HepG2 (cell line): ENCODE measurements at regions of chr19 and their contacts with region 1.

Region 1: DNA sequence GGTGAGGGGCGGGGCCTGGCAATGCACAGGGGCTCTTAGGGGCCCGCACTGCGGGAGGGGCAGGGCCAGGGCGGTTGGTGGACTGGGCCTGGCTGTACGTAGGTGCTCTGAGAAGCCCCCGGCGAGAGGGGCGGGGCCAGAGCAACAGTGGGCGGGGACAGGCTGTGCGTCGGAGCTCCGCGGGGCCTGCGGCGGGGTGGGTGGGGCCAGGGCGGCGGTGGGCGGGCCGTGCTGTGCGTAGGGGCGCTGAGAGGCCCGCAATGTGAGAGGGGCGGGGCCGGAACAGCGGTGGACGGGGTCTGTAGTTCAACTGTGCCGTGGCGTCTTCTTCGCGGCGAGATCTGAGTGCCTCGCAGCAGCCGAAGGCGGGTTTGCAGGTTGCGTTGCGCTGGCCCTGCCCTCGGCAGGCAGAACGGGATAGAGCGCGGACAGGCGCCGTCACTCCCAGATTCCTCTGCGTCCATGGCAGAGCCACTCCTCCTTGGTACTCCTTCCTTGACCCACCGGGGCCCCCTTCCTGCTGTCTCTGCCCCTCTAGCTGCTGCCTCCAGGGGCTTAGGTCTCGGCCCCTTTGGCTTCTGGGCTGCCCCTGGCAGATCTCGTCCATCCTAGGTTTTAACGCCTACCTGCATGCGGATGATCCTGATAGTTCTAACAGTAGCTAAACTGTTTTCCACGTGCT is 33.2 kb downstream of the CCNE1 start:
- DNase-seq: peak; percentile 89
- ATAC-seq: peak; percentile 79
- H3K4me3 ChIP-seq: peak overlapping the region; percentile 55 to 72 (median 58)
- H3K27ac ChIP-seq: peak overlapping the region; percentile 59
- H3K4me1 ChIP-seq: peaks cover 68% of the 10 kb centered on the region
- H3K27me3 ChIP-seq: no peaks in the 10 kb centered on the region
- CTCF ChIP-seq: 0 out of 2 replicates have a peak, but pooled peaks have one; percentile 13
- EP300 ChIP-seq: no peak; a peak in 1 of 4 replicates
- POLR2A ChIP-seq: peak; percentile 69 to 84
- RAD21 ChIP-seq: 0 out of 2 replicates have a peak, but pooled peaks have one; percentile 11

Region 2: GRCh38 chr19:29811125-29812079 is 33.6 kb before region 1 on chr19 and contains the start of gene CCNE1:
- CTCF ChIA-PET with region 1: no interaction called
- POLR2A ChIA-PET with region 1: interaction called, 7 read pairs
- in situ Hi-C with region 1: no loop called
- intact Hi-C with region 1: loop called (anchors 2 kb)
- DNase-seq: peak; percentile 65
- ATAC-seq: peak; percentile 95
- H3K4me3 ChIP-seq: peak within 1 kb of the TSS; percentile 62 to 68 (median 67); a peak in 5 of 6 replicates
- H3K27ac ChIP-seq: peak within 1 kb of the TSS; percentile 30
- H3K4me1 ChIP-seq: peaks cover 18% of the 10 kb centered on the region
- H3K27me3 ChIP-seq: no peaks in the 10 kb centered on the region
- CTCF ChIP-seq: no peak
- EP300 ChIP-seq: no peak
- POLR2A ChIP-seq: no peak; a peak in 1 of 4 replicates
- RAD21 ChIP-seq: no peak
- total RNA-seq, gene CCNE1: 46.9 and 50.6 TPM in 2 replicates

Region 3: GRCh38 chr19:29887442-29887855 is 42.4 kb after region 1 on chr19:
- CTCF ChIA-PET with region 1: no interaction called
- POLR2A ChIA-PET with region 1: no interaction called
- in situ Hi-C with region 1: no loop called
- intact Hi-C with region 1: no loop called
- DNase-seq: no peak
- ATAC-seq: peak; percentile 79
- H3K4me3 ChIP-seq: no peak overlapping the region
- H3K27ac ChIP-seq: no peak overlapping the region
- H3K4me1 ChIP-seq: no peaks in the 10 kb centered on the region
- H3K27me3 ChIP-seq: peaks cover 0 to 10% of the 10 kb centered on the region in 2 experiments; a peak in 1 of 5 replicates
- CTCF ChIP-seq: 0 out of 2 replicates have a peak, but pooled peaks have one; percentile 18
- EP300 ChIP-seq: no peak
- POLR2A ChIP-seq: no peak
- RAD21 ChIP-seq: no peak